Posterior vena cava (tissue), 2 donors: ENCODE measurements at regions of chr20 and their contacts with region 1.

Region 1: DNA sequence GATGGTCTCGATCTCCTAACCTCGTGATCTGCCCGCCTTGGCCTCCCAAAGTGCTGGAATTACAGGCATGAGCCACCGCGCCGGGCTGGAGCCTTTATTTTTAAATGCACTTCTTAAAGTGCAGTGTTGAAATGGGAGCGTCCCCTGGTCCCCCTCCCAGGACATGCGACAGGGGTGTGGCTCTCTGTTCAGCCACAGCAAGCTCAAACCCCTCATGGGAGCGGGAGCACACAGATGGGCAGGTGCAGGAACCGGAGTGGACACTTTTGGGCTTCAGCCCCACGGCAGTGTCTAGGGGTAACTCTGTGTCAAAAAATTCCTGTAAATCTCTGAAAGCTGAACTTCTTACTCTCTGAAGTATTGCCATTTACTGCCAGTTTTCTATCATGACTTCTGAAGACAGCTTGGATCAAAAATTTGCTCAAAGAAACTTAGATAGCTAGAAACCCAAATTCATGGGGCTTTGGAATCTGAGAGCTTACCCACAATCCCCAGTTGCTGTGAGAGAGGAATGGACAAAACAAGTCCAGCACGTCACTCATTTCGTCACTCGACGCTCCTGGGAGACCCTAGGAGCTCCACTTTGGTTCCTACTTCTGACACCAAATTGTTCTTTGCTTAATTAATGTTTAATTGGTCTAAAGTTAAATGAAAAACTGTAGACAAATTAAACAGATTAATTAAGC is 18.1 kb upstream of the L3MBTL1 start:
- DNase-seq: no peak

Region 2: GRCh38 chr20:42697962-42698361 is 791.4 kb before region 1 on chr20:
- intact Hi-C with region 1: loop called in 1 of 2 experiments (anchors 5 kb)
- DNase-seq: no peak